Gastrocnemius medialis (tissue), 4 donors: ENCODE measurements at regions of chr2 and their contacts with region 1.

Region 1: GRCh38 chr2:63594660-63595059 is 5.9 kb downstream of the MDH1 start:
- DNase-seq: no peak
- ATAC-seq: no peak
- H3K4me3 ChIP-seq: no peak overlapping the region
- H3K27ac ChIP-seq: peak overlapping the region; percentile 86 to 92 (median 90)
- H3K4me1 ChIP-seq: peaks cover 61 to 67% of the 10 kb centered on the region in 2 donors
- H3K27me3 ChIP-seq: no peaks in the 10 kb centered on the region
- CTCF ChIP-seq: no peak
- POLR2A ChIP-seq: no peak

Region 2: GRCh38 chr2:63544017-63544627 is 50.5 kb before region 1 on chr2:
- in situ Hi-C with region 1: no loop called
- intact Hi-C with region 1: no loop called
- DNase-seq: no peak
- ATAC-seq: no peak
- H3K4me3 ChIP-seq: no peak overlapping the region
- H3K27ac ChIP-seq: no peak overlapping the region
- H3K4me1 ChIP-seq: no peaks in the 10 kb centered on the region
- H3K27me3 ChIP-seq: no peaks in the 10 kb centered on the region
- CTCF ChIP-seq: no peak
- POLR2A ChIP-seq: no peak

Region 3: GRCh38 chr2:63679252-63679855 is 84.7 kb after region 1 on chr2:
- in situ Hi-C with region 1: no loop called
- intact Hi-C with region 1: no loop called
- DNase-seq: no peak
- ATAC-seq: no peak
- H3K4me3 ChIP-seq: no peak overlapping the region
- H3K27ac ChIP-seq: no peak overlapping the region
- H3K4me1 ChIP-seq: peaks cover 7 to 12% of the 10 kb centered on the region in 2 donors
- H3K27me3 ChIP-seq: no peaks in the 10 kb centered on the region
- CTCF ChIP-seq: no peak
- POLR2A ChIP-seq: no peak

Region 4: DNA sequence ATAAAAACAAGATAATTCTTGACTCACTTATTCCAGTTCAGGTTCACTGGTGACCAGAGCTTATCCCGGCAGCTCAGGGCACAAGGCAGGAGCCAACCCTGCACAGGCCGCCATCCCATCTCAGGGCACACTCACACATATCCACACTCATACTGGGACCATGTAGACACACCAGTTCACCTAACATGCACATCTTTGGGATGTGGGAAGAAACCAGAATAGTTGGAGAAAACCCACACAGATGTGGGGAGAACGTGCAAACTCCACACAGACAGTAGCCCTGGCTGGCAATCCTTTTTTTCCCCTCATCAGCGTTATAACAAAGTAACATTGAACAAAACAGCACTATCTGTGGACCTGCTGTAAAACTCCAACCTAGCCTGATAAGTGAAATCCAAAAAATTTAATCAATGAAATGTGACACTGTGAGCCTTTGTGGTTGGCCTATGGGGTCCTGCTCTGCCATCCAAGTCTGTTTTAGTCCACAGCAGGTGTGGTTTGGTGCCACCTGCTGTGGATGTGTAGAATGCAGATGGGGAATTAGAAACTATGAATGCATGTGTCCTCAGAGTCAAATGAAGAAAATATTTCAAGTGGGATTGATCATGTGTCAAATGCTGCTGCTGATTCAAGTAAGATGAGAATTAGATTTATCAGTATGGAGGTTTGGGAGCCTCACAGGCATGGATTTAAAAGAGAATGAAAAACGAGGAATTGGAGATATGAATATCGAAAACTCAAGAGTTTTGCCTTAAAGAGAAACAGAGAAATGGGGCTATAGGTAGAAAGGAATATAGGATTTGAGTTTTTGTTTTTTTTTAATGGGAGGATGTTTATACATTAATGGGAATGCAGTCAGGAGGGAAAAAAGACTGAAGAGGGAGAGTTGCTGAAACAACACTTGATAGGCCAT is 294.1 kb after region 1 on chr2:
- in situ Hi-C with region 1: loop called in 1 of 4 experiments (anchors 25 kb)
- intact Hi-C with region 1: loop called (anchors 1 kb)
- DNase-seq: peak; percentile 40 to 48
- ATAC-seq: peak; percentile 72 to 84
- H3K4me3 ChIP-seq: no peak overlapping the region
- H3K27ac ChIP-seq: peak overlapping the region; percentile 78 to 90 (median 83)
- H3K4me1 ChIP-seq: peaks cover 32 to 44% of the 10 kb centered on the region in 2 donors
- H3K27me3 ChIP-seq: no peaks in the 10 kb centered on the region
- CTCF ChIP-seq: peak; percentile 73 to 85 (median 78)
- POLR2A ChIP-seq: no peak